GM10248 (cell line): ENCODE measurements at regions of chr6 and their contacts with region 1.

Region 1: GRCh38 chr6:157314705-157315321 is 8.5 kb downstream of the TMEM242 start:
- DNase-seq: peak; percentile 70
- CTCF ChIP-seq: peak; percentile 78

Region 2: DNA sequence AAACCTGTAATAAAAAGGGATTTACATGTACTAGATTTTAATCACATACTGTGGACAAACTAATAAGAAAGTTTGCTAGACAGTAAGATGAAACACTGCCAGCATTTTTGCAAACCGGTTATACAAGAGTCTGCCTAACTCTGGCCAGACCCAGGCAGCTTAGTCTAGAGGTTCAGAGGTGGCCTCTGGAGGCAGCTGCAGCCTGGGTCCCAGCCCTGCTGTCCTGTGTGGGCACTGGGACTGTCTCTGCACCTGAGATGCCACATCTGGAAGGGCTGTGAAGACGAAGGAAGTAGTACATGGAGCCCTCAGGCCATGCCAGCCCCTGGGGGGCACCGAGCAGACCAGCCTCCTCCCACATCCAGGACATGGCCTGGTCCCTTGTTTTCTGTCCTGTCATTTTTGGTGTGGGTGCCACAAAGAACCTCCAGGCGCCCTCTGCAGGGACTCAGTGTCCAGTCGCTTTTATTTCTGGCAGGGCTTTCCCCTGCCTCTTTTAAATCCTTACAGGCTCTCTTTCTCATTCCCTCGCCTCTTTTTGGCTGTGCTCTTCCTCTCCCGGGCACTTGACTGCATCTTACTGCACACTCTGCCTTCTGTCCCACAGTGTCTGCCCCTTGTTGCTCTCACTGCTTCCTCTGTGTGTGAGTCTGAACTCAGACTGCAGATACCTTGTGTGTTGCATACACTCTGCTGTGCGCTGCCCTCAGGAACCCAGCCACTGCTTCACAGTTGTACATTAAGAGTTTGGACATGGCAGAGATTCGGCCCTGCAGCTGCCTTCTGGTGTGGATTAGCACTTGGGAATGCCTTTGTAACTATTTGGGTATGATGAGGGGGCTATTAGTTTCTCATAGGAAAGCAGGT is 282.9 kb after region 1 on chr6:
- CTCF ChIA-PET with region 1: interaction called, 22 read pairs
- POLR2A ChIA-PET with region 1: no interaction called
- DNase-seq: peak; percentile 72
- CTCF ChIP-seq: peak; percentile 74